HEK293T (cell line): ENCODE measurements at regions of chr3 and their contacts with region 1.

Region 1: DNA sequence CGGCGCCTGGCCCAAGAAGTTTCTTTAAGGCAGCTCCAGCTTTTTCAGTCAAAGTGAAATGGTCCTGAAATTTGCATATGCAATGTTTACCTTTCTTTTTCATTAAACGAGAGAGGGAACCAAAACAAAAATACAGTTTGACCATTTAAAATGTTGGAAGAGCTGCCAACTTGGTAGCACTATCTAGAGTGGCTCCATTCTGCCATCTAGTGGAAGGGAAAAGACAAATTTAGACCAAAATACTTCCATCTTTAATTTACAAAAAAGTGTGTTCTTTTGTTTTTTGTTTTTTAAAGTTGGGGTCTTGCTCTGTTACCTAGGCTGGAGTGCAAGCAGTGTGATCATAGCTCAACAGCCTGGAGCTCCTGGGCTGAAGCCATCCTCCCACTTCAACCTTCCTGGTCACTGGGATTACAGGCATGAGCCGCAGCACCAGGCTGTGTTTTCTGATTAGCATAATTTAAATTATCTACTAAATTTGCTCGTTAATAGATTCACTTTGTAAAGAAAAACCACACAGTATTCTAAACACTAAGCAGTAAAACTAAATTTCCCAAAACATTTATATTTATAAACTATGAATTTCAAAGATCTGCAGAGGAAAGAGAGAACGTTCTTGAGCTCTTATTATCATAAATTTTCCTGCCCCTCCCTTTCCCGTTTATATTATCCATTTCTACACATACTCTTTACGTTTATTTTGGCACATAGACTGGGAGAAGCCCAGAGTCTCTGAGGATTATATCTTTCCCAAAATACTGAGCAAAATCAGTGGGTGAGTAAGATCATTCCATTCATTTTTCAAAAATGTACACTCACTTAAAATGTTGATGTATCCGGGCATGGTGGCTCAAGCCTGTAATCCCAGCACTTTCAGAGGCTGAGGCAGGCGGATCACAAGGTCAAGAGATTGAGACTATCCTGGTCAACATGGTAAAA is 15.4 kb upstream of the RFC4 start:
- DNase-seq: no peak

Region 2: GRCh38 chr3:186609247-186609868 is 212.3 kb before region 1 on chr3:
- CTCF ChIA-PET with region 1: interaction called, 14 read pairs
- POLR2A ChIA-PET with region 1: no interaction called
- DNase-seq: no peak